ENCODE measurements at regions of chr7 and their contacts with region 1.

Region 1: DNA sequence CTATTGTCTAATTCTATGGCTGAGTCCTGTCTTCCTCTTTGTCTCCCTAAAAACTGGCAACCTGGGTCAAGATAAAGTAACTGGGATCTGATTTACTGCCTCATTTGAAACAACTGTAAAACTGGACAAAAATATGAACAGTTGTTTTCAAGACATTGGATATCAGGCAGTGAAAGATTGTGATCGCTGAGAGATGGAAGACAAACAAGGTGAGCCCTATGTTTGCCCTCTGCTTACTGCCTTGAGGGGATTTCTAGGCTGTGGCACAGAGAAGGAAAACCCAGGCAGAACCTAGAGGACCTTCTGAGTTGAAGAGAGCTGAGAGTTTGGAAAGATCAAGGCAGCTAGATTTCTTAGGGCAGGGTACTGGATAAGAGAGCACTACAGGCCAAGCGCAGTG is 327.6 kb downstream of the SDK1 start:
- DNase-seq: no peak
- ATAC-seq: no peak
- H3K4me3 ChIP-seq: no peak overlapping the region
- H3K27ac ChIP-seq: no peak overlapping the region
- H3K4me1 ChIP-seq: no peaks in the 10 kb centered on the region
- H3K27me3 ChIP-seq: no peaks in the 10 kb centered on the region
- CTCF ChIP-seq: no peak

Region 2: GRCh38 chr7:3561932-3562331 is 66.7 kb before region 1 on chr7:
- intact Hi-C with region 1: loop called in 2 of 10 experiments (anchors 10 kb)
- DNase-seq: no peak
- ATAC-seq: no peak
- H3K4me3 ChIP-seq: no peak overlapping the region
- H3K27ac ChIP-seq: no peak overlapping the region
- H3K4me1 ChIP-seq: peaks cover 0 to 22% (median 0%) of the 10 kb centered on the region in 9 donors
- H3K27me3 ChIP-seq: no peaks in the 10 kb centered on the region
- CTCF ChIP-seq: no peak

Region 3: DNA sequence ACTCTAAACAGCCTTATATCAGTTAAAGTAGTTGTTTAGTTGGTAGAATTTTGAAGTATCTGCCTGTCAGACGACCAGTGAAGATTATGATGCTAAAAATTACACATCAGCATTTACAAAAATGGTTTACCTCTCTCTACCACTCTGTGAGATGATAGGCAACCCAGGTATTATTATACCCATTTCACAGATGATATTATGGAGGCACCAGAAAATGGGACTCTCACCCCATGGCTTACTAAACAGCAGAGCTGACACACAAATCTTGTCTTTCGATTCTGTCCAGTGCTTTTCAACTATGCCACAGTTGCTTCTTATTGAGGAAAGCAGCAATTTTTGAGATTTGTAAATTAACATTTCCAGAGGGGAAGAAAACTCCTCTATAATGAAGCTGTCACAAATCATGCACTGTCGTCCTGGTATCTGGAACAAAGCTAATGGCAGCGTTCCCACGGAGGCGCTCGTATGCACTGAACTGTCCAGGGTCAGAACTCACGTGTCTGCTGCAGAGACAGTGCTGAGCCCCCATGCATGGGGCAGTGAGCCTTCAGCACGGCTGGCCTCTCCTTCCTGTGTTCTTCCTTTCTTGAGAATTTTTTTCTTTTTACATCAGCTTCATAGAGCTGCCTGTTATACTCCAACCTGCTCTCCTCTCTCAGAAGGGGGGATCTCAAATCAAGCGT is 53.5 kb after region 1 on chr7:
- intact Hi-C with region 1: no loop called
- DNase-seq: no peak
- ATAC-seq: peak in 1 of 8 donors; percentile 55
- H3K4me3 ChIP-seq: no peak overlapping the region
- H3K27ac ChIP-seq: no peak overlapping the region
- H3K4me1 ChIP-seq: no peaks in the 10 kb centered on the region
- H3K27me3 ChIP-seq: no peaks in the 10 kb centered on the region
- CTCF ChIP-seq: no peak